CD14-positive monocyte (primary cell): ENCODE measurements at regions of chr7 and their contacts with region 1.

Region 1: GRCh38 chr7:24665564-24666294 is 91.5 kb downstream of the GSDME start:
- DNase-seq: peak; percentile 5 to 32 (median 21)
- H3K4me3 ChIP-seq: no peak overlapping the region
- H3K4me3 Mint-ChIP-seq: no peak overlapping the region
- H3K27ac ChIP-seq: no peak overlapping the region
- H3K27ac Mint-ChIP-seq: no peak overlapping the region
- H3K4me1 ChIP-seq: no peaks in the 10 kb centered on the region
- H3K4me1 Mint-ChIP-seq: no peaks in the 10 kb centered on the region
- H3K27me3 ChIP-seq: no peaks in the 10 kb centered on the region
- H3K27me3 Mint-ChIP-seq: no peaks in the 10 kb centered on the region
- CTCF ChIP-seq: peak; percentile 93

Region 2: DNA sequence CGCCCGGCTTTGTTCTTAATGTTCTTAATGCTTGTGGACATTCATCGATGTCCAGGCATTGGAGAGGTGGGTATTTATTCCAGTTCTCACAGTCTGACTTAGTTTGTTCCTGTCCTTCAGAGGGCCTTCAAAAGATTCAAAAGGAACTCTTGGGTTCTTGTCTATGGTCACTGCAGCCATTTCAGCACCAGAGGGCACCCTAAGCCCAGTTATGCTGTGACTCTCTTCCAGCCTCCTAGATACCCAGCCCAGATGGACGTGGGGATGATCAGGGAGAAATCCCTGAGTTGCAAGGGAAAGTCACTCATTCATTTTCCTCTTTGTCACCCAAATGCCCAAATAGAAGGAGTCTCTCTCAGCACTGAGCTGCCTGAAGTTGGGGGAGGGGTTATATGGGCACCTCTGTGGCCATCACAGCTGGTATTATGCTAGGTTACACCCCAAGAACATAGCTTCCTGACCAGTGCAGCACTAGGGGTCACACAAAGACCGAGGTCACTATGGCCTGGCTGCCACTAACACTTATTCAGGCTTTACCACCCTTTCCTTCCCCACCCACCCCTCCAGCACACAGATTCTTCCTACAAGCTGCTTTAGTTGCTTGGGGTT is 1095.0 kb before region 1 on chr7:
- intact Hi-C with region 1: loop called (anchors 2 to 5 kb)
- DNase-seq: peak; percentile 35 to 68 (median 56)
- H3K4me3 ChIP-seq: no peak overlapping the region
- H3K4me3 Mint-ChIP-seq: no peak overlapping the region
- H3K27ac ChIP-seq: no peak overlapping the region
- H3K27ac Mint-ChIP-seq: no peak overlapping the region
- H3K4me1 ChIP-seq: no peaks in the 10 kb centered on the region
- H3K4me1 Mint-ChIP-seq: no peaks in the 10 kb centered on the region
- H3K27me3 ChIP-seq: no peaks in the 10 kb centered on the region
- H3K27me3 Mint-ChIP-seq: peaks cover 0 to 13% (median 2%) of the 10 kb centered on the region in 3 donors
- CTCF ChIP-seq: peak; percentile 82

Region 3: DNA sequence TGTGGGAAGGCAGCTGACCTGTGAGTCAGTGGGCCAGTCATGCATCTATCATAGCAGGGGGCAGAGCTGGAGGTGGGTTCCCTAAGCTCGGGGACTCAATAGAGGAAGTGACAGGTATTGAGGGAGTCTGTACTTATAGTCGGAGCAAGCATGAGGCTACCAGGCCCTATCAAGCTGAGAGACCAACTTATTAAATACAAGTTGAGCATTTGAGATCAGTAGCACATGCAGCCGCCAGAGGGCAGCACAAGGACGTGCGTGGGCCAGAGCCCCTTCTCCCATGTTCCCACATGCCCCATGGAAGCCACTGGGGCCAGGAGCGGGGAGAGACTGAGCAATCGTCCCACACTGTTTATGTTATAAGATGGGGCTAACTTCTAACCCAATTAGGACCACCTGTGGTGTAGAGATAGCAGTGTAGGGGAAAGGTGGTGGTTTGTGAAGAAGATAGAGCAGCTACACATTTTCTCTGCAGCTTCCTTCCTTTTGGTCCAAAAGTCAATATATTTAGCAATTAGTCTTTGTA is 968.8 kb before region 1 on chr7:
- intact Hi-C with region 1: loop called in 1 of 2 experiments (anchors 10 kb)
- DNase-seq: peak; percentile 44 to 60 (median 54)
- H3K4me3 ChIP-seq: no peak overlapping the region
- H3K4me3 Mint-ChIP-seq: peak overlapping the region in 1 of 2 donors; percentile 12
- H3K27ac ChIP-seq: no peak overlapping the region
- H3K27ac Mint-ChIP-seq: no peak overlapping the region
- H3K4me1 ChIP-seq: no peaks in the 10 kb centered on the region
- H3K4me1 Mint-ChIP-seq: peaks cover 2% of the 10 kb centered on the region
- H3K27me3 ChIP-seq: no peaks in the 10 kb centered on the region
- H3K27me3 Mint-ChIP-seq: no peaks in the 10 kb centered on the region
- CTCF ChIP-seq: peak; percentile 83

Region 4: DNA sequence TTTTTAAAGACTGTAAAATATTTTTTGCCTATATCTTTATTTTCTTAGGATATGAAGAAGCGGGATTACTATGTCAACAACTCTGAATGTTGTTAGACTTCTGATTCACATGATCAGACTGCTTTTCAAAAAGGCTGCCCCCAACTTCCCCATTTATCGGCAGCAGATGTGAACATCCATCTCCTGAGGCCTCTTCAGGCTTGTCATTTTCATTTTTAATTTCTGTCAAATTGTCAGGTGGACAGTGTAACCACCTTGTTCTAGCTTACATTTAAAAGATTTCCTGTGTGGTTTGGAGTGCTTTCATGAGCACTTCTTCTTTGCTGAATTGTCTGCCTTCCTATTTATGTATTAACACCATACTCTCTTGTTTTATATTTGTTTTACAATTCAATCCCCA is 170.4 kb after region 1 on chr7:
- intact Hi-C with region 1: no loop called
- DNase-seq: peak; percentile 33 to 60 (median 56)
- H3K4me3 ChIP-seq: no peak overlapping the region
- H3K4me3 Mint-ChIP-seq: peak overlapping the region in 1 of 2 donors; percentile 11
- H3K27ac ChIP-seq: peak overlapping the region in 1 of 2 donors; percentile 32
- H3K27ac Mint-ChIP-seq: peak overlapping the region in 1 of 7 donors; percentile 35
- H3K4me1 ChIP-seq: peaks cover 47 to 50% of the 10 kb centered on the region in 2 donors
- H3K4me1 Mint-ChIP-seq: peaks cover 51% of the 10 kb centered on the region
- H3K27me3 ChIP-seq: no peaks in the 10 kb centered on the region
- H3K27me3 Mint-ChIP-seq: no peaks in the 10 kb centered on the region
- CTCF ChIP-seq: no peak